ENCODE measurements at regions of chr22 and their contacts with region 1.

Region 1: GRCh38 chr22:32528984-32529982 is 54.7 kb downstream of the FBXO7 start:
- DNase-seq: peak; percentile 88

Region 2: GRCh38 chr22:32622004-32622743 is 92.9 kb after region 1 on chr22:
- intact Hi-C with region 1: loop called (anchors 2 kb)
- DNase-seq: no peak

Region 3: DNA sequence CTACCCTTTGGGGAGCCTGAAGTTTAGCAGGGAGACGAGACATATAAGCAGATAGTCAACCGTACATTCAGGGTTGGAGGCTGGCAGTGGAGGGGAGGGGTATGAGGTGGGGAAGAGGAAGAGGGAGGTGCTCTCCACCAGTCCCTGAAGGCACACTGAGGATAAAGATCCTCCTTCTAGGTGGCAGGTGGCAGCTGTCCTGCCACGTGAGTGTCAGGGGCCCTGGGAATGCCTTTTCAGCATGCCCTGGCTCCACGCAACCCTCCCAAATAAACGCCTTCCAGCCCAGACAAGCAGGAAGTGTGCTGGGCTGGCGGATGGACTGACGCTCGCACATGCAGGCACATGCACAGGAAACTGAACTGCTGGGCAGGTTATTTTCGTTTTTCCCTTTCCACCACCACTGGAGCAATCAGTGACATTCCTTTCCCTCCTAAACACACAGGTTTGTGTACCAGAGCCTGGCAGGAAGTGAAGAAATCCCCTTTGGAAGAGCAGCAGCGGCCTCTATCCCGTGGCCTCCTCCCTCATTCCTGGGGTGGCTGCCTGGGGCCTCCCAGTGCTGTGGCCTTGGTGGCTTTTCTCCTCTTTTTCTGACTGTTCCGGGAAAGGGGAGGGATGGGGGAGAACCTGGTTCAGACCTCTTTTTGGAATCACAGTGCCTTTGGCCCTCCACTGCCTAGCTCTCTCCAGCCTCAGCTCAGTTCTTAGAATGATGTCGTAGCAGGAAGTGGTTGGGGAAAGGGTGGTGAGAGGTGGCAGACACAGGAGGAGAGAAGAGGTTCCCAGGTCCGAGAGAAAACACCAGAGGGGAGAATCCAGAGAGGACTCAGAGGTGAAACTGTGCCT is 115.2 kb after region 1 on chr22:
- intact Hi-C with region 1: loop called (anchors 5 kb)
- DNase-seq: no peak

Region 4: GRCh38 chr22:32660292-32660691 is 131.0 kb after region 1 on chr22:
- intact Hi-C with region 1: loop called (anchors 2 kb)
- DNase-seq: no peak

Region 5: DNA sequence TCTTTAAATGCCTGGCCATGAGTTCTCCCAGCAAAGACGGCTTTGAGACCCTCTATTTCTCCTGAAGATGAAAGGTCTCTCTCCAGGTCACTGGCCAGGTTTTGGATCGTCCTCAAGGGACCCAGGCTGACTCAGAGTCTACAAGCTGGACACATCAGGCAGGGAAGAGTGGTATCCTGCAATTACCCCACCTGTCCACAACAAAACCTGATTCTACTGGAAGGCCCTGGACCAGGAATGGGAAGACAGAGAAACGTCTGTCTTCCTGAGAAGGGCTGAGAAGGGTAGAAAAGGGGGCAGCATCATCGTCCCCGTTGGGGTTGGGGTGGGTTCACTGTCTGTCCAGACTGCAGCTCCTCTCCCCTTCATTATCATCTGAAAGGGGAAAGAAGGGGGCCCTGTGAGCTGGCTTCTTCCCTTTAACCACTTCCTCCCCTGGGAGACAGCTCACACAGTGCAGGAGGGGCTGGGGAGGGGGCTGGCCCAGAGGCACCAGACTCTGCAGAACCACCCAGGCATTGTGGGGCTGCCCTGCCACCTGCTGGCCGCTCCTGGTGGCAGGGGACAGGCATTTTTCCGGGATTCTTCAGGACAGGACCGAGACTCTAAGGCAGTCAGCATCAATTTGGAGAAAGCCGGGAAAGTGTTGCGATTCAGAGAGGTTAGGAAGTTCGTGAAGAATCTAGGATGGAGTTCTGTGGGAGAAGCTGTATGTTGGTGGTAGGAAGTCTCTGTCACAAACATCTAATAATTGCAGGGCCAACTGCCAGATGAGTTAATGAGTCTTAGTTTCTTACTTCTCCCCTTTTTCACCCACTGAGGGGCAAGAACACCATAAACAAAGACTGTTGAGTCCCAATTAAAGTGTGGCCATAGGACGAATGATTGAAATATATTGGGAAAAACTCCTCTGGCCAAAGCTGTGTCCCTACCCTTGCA is 471.3 kb after region 1 on chr22:
- intact Hi-C with region 1: loop called (anchors 2 kb)
- DNase-seq: peak; percentile 76